Naive thymus-derived CD8-positive, alpha-beta T cell (primary cell): ENCODE measurements at regions of chr12 and their contacts with region 1.

Region 1: DNA sequence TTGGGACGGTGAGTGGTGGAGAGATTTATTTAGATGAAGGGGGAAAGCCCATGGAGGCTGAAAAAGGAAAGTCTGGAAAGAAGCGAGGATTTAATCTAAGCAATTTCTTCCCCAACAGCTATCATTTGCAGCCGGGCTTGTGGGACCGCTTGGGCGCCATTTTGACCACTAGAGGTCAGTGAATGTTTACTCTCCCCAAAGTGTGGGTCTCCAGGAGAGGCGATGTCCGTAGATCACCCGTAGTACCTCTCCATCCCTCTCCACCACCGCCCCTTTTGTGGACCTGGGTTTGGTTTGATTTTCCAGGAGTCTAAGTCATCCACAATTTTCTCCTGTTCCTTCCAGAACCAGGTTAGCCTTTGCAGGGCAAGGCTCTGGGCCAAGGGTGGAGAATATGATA is 91.2 kb upstream of the PARP11 start:
- DNase-seq: no peak
- ATAC-seq: no peak
- H3K4me3 Mint-ChIP-seq: no peak overlapping the region
- H3K27ac Mint-ChIP-seq: peak overlapping the region in 5 of 10 donors; percentile 1 to 81 (median 48)
- H3K4me1 Mint-ChIP-seq: peaks cover 19 to 34% (median 25%) of the 10 kb centered on the region in 4 donors
- H3K27me3 Mint-ChIP-seq: no peaks in the 10 kb centered on the region

Region 2: DNA sequence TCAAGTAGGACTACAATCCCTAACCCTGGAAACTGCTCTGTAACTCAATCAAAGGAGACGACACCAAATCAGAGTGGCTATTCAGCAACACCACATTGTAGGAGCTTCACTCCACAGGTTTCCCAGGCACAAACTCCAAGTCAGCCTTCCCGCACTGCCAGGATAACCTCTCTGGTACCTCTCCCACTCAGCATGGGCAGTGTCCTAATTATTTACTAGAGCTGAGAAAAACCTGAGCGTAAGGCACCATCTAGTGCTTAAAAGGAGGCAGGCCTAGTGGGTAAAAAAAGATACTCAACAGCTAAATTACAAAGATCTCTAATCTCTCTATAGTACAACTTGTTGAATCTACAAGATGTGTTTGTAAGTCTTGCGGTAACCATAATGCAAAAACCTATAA is 127.4 kb before region 1 on chr12:
- POLR2A ChIA-PET with region 1: no interaction called
- DNase-seq: no peak
- ATAC-seq: no peak
- H3K4me3 Mint-ChIP-seq: peak overlapping the region in 4 of 10 donors; percentile 4 to 62 (median 10)
- H3K27ac Mint-ChIP-seq: peak overlapping the region in 4 of 10 donors; percentile 7 to 77 (median 76)
- H3K4me1 Mint-ChIP-seq: peaks cover 22 to 75% (median 62%) of the 10 kb centered on the region in 4 donors
- H3K27me3 Mint-ChIP-seq: no peaks in the 10 kb centered on the region

Region 3: GRCh38 chr12:3905664-3906063 is 58.8 kb before region 1 on chr12:
- POLR2A ChIA-PET with region 1: interaction called, 24 read pairs
- DNase-seq: peak in 1 of 10 donors; percentile 9
- ATAC-seq: peak in 1 of 2 donors; percentile 36
- H3K4me3 Mint-ChIP-seq: peak overlapping the region; percentile 34 to 95 (median 82)
- H3K27ac Mint-ChIP-seq: peak overlapping the region in 9 of 10 donors; percentile 16 to 96 (median 94)
- H3K4me1 Mint-ChIP-seq: peaks cover 7 to 38% (median 32%) of the 10 kb centered on the region in 4 donors
- H3K27me3 Mint-ChIP-seq: no peaks in the 10 kb centered on the region

Region 4: GRCh38 chr12:3988519-3989448 is 24.3 kb after region 1 on chr12:
- POLR2A ChIA-PET with region 1: interaction called, 40 read pairs
- DNase-seq: peak in 7 of 10 donors; percentile 21 to 73 (median 44)
- ATAC-seq: peak; percentile 92 to 93
- H3K4me3 Mint-ChIP-seq: peak overlapping the region; percentile 42 to 80 (median 66)
- H3K27ac Mint-ChIP-seq: peak overlapping the region; percentile 80 to 96 (median 91)
- H3K4me1 Mint-ChIP-seq: peaks cover 14 to 39% (median 33%) of the 10 kb centered on the region in 4 donors
- H3K27me3 Mint-ChIP-seq: no peaks in the 10 kb centered on the region

Region 5: DNA sequence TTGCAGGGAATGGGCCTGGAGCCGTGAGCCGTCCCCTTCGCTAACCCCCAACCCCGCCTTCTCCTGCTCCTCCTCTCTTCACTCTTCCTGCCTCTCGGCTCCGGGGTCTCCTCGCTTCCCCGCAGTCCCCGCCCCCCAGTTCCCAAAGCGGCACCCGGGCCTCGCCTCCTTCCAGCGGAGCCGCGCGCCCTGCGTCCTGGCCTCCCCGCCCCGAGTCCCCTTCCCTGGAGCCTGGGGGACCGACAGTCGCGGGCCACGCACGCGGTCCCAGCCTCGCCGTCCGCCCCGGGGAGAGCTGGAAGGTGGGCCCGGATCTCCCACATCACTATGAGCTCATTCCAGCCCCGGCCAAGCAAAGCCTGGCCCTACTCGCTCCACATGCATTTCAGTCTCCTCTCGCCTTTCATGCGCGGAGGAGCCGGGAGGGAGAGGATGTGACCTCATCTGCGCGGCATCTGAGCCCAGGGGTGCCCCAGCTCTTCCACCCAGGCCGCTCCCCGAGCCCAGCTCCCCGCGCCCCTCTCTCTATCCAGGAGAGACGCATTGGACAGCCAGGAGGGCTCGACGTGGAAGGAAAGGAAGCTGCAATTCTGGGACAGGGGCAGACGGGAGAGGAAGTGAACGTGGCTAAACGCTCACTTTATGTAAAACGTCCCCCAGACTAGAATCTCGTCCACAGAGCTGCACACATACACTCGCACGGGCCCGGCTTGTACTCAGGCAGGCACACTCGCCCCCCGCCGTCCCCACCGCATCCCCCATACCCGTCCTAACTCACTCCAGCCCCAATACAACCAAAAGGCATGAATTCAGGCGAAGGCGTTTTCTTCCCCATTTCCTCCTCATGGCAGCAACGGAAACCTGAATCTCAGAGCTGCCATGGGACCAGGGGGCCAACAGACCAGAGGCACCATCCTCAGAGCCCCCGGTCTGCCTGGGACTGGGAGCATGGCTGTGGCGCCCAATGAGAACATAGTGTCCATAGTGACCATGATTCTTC is 200.4 kb after region 1 on chr12:
- POLR2A ChIA-PET with region 1: no interaction called
- DNase-seq: peak; percentile 29 to 78 (median 48)
- ATAC-seq: peak; percentile 96 to 97
- H3K4me3 Mint-ChIP-seq: peak overlapping the region; percentile 81 to 95 (median 92)
- H3K27ac Mint-ChIP-seq: peak overlapping the region; percentile 85 to 96 (median 91)
- H3K4me1 Mint-ChIP-seq: peaks cover 10 to 30% (median 15%) of the 10 kb centered on the region in 4 donors
- H3K27me3 Mint-ChIP-seq: peaks cover 0 to 2% (median 0%) of the 10 kb centered on the region in 5 donors

Region 6: GRCh38 chr12:4256043-4256826 is 291.8 kb after region 1 on chr12:
- POLR2A ChIA-PET with region 1: no interaction called
- DNase-seq: no peak
- ATAC-seq: no peak
- H3K4me3 Mint-ChIP-seq: no peak overlapping the region
- H3K27ac Mint-ChIP-seq: peak overlapping the region in 1 of 10 donors; percentile 57
- H3K4me1 Mint-ChIP-seq: peaks cover 2 to 4% (median 3%) of the 10 kb centered on the region in 4 donors
- H3K27me3 Mint-ChIP-seq: peaks cover 0 to 7% (median 0%) of the 10 kb centered on the region in 5 donors

Region 7: DNA sequence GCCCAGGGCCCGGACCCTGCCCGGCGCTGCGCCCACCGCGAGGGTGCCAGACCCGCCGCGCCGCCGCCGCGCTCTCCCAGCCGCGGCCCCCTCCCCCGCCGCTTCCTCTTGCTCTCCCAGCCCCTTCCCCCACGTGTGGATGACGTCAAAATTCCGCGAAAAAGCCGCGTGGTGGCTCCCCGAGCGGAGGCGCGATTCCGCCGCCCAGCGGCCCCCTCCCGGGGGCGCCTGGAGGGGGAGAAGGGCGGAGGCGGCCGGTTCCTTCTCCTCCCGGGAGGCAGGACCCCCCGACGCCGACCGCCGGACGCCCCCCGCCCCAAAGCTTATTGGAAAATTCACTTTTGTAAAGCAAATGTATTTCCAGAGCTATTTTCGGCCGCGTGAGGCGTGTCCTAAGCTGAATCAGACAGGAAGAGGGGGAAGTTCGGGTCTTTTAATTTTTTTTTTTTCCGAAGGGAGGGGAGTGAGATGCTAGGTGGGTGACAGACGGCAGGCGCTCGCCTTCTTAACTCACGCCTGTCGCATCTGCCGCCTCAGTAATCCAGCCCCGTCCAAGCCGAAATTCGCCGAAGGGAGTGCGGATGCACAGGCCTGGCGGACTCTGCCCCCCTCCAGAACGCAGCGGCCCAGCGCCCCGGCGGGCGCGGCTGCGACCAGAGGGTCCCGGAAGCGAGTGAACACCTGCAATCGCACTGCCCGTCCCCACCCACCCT is 305.0 kb after region 1 on chr12:
- POLR2A ChIA-PET with region 1: interaction called, 19 read pairs
- DNase-seq: peak; percentile 83 to 98 (median 94)
- ATAC-seq: peak; percentile 46 to 49
- H3K4me3 Mint-ChIP-seq: peak overlapping the region; percentile 95 to 99 (median 96)
- H3K27ac Mint-ChIP-seq: peak overlapping the region; percentile 93 to 100 (median 99)
- H3K4me1 Mint-ChIP-seq: peaks cover 11 to 27% (median 18%) of the 10 kb centered on the region in 4 donors
- H3K27me3 Mint-ChIP-seq: peaks cover 0 to 5% (median 0%) of the 10 kb centered on the region in 5 donors